ENCODE measurements at regions of chr3 and their contacts with region 1.

Region 1: GRCh38 chr3:101809178-101810021 is 30.4 kb downstream of the NXPE3 start:
- DNase-seq: no peak
- ATAC-seq: no peak

Region 2: GRCh38 chr3:101758224-101758623 is 51.2 kb before region 1 on chr3:
- intact Hi-C with region 1: no loop called
- DNase-seq: no peak
- ATAC-seq: no peak

Region 3: GRCh38 chr3:102092617-102093466 is 283.4 kb after region 1 on chr3:
- intact Hi-C with region 1: no loop called
- DNase-seq: no peak
- ATAC-seq: no peak

Region 4: DNA sequence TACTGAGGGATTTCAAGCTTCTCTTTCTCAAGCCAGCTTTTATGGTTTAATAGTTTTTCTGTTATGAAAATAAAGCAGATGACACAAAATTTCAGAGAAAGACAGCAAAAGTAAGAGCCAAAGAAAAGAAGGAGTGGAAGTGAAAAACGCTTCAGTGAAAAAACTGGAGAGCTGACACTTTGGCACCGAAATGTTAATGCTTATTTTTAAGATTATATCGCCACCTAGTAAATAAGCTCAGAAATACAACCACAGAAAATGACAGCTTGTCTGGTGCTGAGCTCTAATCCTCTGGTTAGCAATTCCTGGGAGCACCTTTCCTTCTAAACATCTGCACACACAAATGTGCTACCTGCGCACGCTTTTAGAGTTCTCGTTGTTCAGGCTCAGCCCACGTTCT is 727.1 kb after region 1 on chr3:
- intact Hi-C with region 1: loop called (anchors 5 kb)
- DNase-seq: no peak
- ATAC-seq: no peak